BJ (cell line): ENCODE measurements at regions of chr18 and their contacts with region 1.

Region 1: DNA sequence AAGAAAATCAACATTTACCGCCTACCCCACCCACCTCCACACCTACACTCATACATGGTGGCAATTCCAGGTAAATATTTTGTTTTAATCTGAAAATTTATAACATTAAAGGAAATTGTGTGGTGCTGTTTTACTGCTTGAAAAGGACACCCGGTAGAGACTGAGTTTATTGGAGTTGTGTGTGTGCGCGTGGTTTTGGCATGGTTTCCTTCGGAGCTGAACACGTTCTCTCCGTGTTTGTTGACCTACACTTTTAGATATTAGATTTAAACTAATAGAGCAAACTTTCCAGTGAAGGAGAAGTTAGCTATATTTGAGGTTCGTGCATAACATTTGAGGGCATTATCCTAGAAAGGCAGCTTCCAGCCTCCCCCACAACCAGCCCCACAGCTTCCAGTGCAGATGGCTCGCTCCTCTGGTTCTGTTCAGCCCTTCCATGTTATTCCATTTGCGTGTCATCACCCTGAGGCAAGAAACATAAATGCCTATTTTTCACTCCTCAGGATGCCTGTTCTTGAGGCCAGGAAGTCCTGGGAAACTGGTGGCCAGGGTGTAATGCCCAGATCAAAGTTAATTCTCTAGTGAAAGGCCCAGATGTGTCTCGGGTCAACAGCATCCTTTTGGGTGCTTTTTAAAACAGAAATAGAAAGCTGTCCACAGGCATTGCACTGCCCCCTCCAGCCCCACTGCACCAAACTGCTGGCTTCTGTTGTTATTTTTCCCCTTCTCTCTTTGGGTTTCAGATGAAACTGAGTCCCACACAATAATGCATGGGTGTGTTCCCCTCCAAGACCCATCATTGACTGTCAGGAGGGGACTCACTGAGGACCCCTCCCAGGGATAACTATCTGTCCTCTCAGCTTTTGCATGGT is 190.2 kb downstream of the SETBP1 start:
- DNase-seq: no peak
- H3K4me3 ChIP-seq: no peak overlapping the region
- H3K27me3 ChIP-seq: no peaks in the 10 kb centered on the region
- CTCF ChIP-seq: no peak

Region 2: DNA sequence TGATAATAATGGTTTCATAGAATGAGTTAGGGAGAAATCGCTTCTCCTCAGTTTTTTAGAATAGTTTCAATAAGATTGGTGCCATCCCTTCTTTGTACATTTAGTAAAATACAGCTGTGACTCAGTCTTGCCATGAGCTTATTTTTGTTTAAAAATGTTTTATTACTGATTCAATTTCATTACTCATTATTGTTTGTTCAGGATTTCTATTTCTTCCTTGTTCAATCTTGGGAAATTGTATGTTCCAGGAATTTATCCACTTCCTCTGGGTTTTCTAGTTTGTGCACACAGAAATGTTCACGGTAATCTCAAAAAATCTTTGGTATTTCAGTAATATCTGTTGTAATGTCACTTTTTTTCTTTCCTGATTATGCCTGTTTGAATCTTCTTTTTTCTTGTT is 561.7 kb before region 1 on chr18:
- CTCF ChIA-PET with region 1: no interaction called
- POLR2A ChIA-PET with region 1: interaction called, 14 read pairs
- DNase-seq: peak; percentile 24
- H3K4me3 ChIP-seq: no peak overlapping the region
- H3K27me3 ChIP-seq: no peaks in the 10 kb centered on the region
- CTCF ChIP-seq: no peak

Region 3: GRCh38 chr18:44852818-44853217 is 18.0 kb before region 1 on chr18:
- CTCF ChIA-PET with region 1: no interaction called
- POLR2A ChIA-PET with region 1: no interaction called
- DNase-seq: no peak
- H3K4me3 ChIP-seq: no peak overlapping the region
- H3K27me3 ChIP-seq: no peaks in the 10 kb centered on the region; the same call in 1 of the 2 replicates
- CTCF ChIP-seq: no peak

Region 4: DNA sequence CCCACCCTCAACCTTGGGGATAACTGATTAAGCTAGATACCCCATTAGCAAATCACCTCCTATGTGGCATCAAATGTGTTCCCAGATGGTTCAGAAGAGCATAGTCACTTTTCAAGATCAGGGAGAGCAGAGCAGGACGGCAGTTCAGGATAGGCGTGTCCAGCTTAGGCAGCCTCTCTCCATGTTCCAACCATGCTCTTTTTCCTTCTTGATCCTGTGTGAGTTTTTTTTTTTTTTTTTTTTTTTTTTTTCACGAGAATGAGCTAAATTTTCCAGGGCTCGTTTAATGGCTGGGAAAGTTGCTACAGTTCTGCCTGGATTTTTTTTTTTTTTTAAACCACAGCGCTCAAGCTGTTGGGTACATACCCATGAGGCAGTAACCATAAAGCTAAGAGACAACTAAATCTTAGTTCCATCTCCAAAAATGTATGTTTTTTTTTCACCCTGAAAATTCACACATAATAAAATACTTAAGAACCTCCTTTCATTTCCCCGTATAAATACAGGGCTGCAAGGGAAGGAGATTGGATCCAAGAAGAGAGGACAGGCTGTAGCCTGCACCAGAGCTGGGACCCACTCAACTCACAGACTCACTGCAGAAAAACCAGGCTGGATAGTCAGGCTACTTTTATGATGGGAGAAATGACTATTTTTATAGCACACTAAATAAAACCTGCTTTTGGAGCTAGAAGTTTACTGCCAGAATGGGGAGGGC is 54.1 kb after region 1 on chr18:
- CTCF ChIA-PET with region 1: no interaction called
- POLR2A ChIA-PET with region 1: interaction called, 18 read pairs
- DNase-seq: no peak
- H3K4me3 ChIP-seq: no peak overlapping the region
- H3K27me3 ChIP-seq: no peaks in the 10 kb centered on the region
- CTCF ChIP-seq: no peak

Region 5: GRCh38 chr18:45416168-45416567 is 545.3 kb after region 1 on chr18:
- CTCF ChIA-PET with region 1: no interaction called
- POLR2A ChIA-PET with region 1: no interaction called
- DNase-seq: peak; percentile 30
- H3K4me3 ChIP-seq: no peak overlapping the region
- H3K27me3 ChIP-seq: no peaks in the 10 kb centered on the region; the same call in 1 of the 2 replicates
- CTCF ChIP-seq: no peak